Activated B cell treated with CpG ODN at 0.5 μM for 24 hours (primary cell): ENCODE measurements at regions of chr12 and their contacts with region 1.

Region 1: DNA sequence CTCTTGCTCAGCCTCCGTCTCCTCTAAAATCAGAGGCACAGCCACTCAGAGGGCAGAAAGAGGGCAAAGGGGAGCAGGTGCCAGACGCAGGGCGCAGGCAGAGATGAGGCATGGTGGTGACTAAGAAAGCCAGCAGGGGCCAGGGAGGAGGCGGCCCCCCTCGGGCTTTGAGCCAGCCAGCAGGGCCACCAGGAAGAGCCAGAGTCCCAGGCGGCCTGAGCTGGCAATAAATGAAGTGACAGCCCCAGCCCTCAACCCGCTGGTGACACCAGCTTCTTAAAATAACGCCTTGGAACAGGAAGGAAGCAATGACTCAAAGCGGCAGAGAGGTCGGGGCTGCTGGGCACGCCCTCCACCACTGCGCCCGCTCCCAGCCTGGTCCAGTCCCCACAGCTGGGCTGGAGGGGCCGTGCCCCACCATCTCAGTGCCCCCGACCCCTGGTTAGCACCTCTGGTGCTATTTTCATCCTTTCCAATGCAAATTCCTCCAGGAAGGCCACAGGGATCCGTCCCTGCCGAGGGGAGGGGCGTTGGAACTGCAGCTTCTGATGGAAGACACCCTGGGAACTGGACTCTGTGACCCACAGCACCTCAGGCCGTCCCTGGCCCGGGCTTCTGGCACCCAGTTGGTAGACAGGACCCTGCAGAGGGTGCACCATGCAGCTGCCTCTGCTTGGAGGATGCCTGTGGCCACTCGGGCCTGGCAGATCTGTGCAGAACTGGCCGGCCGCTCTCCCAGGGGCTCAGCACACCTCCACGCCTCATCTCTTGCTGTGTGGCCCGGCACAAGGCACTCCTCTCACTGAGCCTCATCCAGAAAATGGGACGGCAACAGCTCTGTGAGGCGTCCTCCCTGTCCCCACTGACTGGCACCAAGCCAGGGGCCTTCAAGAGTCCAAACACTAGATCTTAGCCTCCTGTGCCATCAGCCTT is 113.7 kb downstream of the NCOR2 start:
- DNase-seq: peak; percentile 67
- ATAC-seq: peak; percentile 68
- H3K4me3 Mint-ChIP-seq: peak overlapping the region; percentile 69
- H3K27ac Mint-ChIP-seq: peak overlapping the region; percentile 76
- H3K4me1 Mint-ChIP-seq: peaks cover 75% of the 10 kb centered on the region
- H3K27me3 Mint-ChIP-seq: no peaks in the 10 kb centered on the region
- CTCF ChIP-seq: no peak

Region 2: GRCh38 chr12:124466216-124467128 is 12.8 kb after region 1 on chr12:
- CTCF ChIA-PET with region 1: interaction called, 24 read pairs
- POLR2A ChIA-PET with region 1: interaction called, 62 read pairs
- intact Hi-C with region 1: loop called (anchors 1 kb)
- DNase-seq: peak; percentile 79
- ATAC-seq: peak; percentile 97
- H3K4me3 Mint-ChIP-seq: peak overlapping the region; percentile 71
- H3K27ac Mint-ChIP-seq: peak overlapping the region; percentile 77
- H3K4me1 Mint-ChIP-seq: peaks cover 55% of the 10 kb centered on the region
- H3K27me3 Mint-ChIP-seq: no peaks in the 10 kb centered on the region
- CTCF ChIP-seq: no peak

Region 3: GRCh38 chr12:124493809-124494750 is 40.4 kb after region 1 on chr12:
- CTCF ChIA-PET with region 1: interaction called, 5 read pairs
- POLR2A ChIA-PET with region 1: interaction called, 33 read pairs
- intact Hi-C with region 1: loop called (anchors 1 kb)
- DNase-seq: peak; percentile 59
- ATAC-seq: peak; percentile 96
- H3K4me3 Mint-ChIP-seq: peak overlapping the region; percentile 76
- H3K27ac Mint-ChIP-seq: peak overlapping the region; percentile 83
- H3K4me1 Mint-ChIP-seq: peaks cover 69% of the 10 kb centered on the region
- H3K27me3 Mint-ChIP-seq: no peaks in the 10 kb centered on the region
- CTCF ChIP-seq: no peak

Region 4: GRCh38 chr12:124713436-124714082 is 259.9 kb after region 1 on chr12:
- CTCF ChIA-PET with region 1: no interaction called
- POLR2A ChIA-PET with region 1: no interaction called
- intact Hi-C with region 1: loop called (anchors 1 kb)
- DNase-seq: peak; percentile 46
- ATAC-seq: peak; percentile 90
- H3K4me3 Mint-ChIP-seq: peak overlapping the region; percentile 52
- H3K27ac Mint-ChIP-seq: peak overlapping the region; percentile 77
- H3K4me1 Mint-ChIP-seq: peaks cover 19% of the 10 kb centered on the region
- H3K27me3 Mint-ChIP-seq: no peaks in the 10 kb centered on the region
- CTCF ChIP-seq: no peak

Region 5: DNA sequence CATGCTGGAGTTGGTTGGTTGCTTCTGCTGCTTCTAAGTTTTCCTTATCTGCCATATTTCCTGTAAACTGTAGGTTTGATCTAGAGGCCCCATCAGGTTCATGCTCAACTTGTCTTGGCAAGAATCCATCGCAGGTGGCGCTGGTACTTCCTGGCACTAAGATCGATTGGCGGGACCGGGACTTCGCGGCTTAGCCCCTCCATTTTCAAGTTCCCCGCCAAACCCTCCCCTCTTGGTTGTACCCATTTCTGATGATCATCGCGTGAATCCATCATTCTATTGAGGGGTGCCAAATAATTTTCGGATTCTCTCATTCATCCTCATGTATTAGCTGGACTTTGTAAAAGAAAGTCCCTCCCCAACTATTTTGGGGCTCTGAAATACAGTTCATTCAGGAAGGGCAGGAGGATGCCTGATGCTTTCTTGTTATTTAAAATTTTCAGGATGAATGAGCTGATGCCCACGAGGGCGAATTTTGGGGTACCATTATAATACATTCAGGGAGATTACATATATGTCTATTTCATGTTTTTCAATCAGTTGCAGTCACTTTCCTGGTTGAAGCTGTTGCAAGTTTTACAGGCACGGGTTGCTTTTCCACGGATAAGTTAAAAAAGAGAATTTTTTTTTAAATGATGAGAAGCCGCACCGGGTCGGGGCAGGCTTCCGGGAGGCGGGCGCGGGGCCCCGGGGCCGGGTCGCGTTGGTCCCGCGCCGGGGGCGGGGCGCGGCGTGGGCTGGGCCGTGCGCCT is 539.4 kb after region 1 on chr12:
- CTCF ChIA-PET with region 1: no interaction called
- POLR2A ChIA-PET with region 1: no interaction called
- intact Hi-C with region 1: loop called (anchors 10 kb)
- DNase-seq: peak; percentile 60
- ATAC-seq: peak; percentile 55
- H3K4me3 Mint-ChIP-seq: peak overlapping the region; percentile 89
- H3K27ac Mint-ChIP-seq: peak overlapping the region; percentile 92
- H3K4me1 Mint-ChIP-seq: peaks cover 52% of the 10 kb centered on the region
- H3K27me3 Mint-ChIP-seq: no peaks in the 10 kb centered on the region
- CTCF ChIP-seq: no peak